K562 (cell line): ENCODE measurements at regions of chr14 and their contacts with region 1.

Region 1: DNA sequence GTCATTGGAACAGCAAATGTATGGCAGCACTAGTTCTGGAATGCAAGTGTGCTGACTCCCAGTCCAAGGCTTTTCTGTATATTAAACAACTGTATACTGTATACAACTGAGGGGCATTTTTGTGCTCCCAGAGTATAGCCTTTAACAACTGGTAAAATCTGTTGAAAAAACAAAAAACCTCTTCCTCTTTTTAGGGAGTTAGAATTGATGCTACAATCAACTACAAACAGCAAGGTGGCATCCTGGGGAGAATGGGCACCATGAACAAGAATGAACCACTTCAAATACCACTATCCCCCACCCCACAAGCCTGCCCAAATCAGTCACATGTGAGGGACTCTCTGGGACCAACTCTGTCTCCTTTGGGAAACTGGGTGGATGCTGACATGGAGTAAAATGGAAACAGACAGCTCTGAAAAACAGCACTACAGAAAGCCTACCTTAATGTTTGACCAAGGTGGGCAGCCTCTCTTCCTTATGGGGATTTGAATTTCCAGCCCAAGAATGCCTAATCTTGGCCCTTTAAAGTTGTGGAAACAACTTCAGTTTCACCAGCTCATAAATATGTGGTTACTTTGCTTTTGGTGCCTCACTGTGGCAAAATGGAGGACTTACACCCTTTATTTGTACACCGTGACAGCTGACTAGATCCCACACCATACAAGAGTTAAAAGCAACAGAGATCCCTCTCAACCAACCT is 7.5 kb downstream of the VTI1B start:
- DNase-seq: peak; percentile 16 to 65 (median 32)
- ATAC-seq: peak; percentile 95
- H3K4me3 ChIP-seq: no peak overlapping the region
- H3K27ac ChIP-seq: no peak overlapping the region
- H3K4me1 ChIP-seq: peaks cover 0 to 5% of the 10 kb centered on the region in 2 experiments; a peak in 3 of 5 replicates
- H3K27me3 ChIP-seq: no peaks in the 10 kb centered on the region
- CTCF ChIP-seq: peak; percentile 58 to 75 (median 64); a peak in 5 of 6 replicates
- EP300 ChIP-seq: no peak
- POLR2A ChIP-seq: no peak
- RAD21 ChIP-seq: peak; percentile 76 to 93

Region 2: DNA sequence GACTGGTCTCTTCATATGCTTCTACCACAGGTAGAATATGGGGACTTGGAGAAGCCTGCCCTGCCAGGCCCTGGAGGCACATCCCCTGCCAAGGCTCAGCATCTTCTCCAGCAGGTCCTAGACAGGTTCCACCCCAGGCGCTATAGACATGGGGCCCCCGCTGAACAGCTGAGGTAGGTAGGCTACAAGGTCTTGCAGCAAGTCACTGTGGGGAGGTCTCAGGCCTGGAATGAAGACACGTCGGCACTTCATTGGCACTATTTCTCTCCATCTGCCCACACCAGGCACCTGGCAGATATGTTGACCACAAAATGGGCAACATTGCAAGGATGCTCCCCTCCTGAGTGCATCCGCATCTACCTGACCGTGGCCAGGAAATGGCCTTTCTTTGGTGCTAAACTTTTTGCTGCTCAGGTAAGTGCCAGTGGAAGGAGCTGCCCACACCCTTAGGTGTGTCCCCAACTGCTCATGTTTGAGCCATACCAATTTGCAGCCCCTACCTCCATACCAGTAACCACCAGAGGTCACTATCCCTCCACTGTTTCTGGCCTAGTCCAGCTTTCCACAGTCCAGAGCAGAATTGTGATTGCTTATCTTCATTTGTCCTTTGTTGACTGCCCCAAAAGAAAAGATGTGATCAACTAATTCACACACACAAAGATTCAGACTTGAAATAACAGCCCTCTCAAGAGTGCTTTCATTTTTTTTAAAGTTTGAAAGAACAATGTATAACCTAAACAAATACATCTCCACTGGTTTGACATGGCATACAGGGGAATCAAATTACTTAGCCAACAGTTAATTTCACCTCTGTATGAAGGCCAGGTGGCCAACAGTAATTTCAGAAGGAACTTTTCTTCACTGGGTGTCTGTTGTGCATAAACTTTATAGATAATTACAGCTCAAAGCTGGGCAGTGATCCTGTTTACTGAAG is 82.9 kb before region 1 on chr14:
- CTCF ChIA-PET with region 1: interaction called, 16 read pairs
- POLR2A ChIA-PET with region 1: interaction called, 7 read pairs
- in situ Hi-C with region 1: loop called (anchors 5 kb)
- intact Hi-C with region 1: loop called (anchors 1 kb)
- DNase-seq: peak; percentile 57 to 72 (median 66)
- ATAC-seq: peak; percentile 94
- H3K4me3 ChIP-seq: no peak overlapping the region
- H3K27ac ChIP-seq: no peak overlapping the region
- H3K4me1 ChIP-seq: peaks cover 0 to 6% of the 10 kb centered on the region in 2 experiments; a peak in 2 of 5 replicates
- H3K27me3 ChIP-seq: no peaks in the 10 kb centered on the region
- CTCF ChIP-seq: peak; percentile 72 to 83 (median 78)
- EP300 ChIP-seq: no peak
- POLR2A ChIP-seq: no peak
- RAD21 ChIP-seq: peak; percentile 90 to 94

Region 3: GRCh38 chr14:67619446-67620216 is 47.3 kb before region 1 on chr14 and contains the start of gene ARG2:
- CTCF ChIA-PET with region 1: interaction called, 14 read pairs
- POLR2A ChIA-PET with region 1: interaction called, 8 read pairs
- in situ Hi-C with region 1: loop called (anchors 5 kb)
- intact Hi-C with region 1: loop called (anchors 1 kb)
- DNase-seq: peak; percentile 94 to 96 (median 96)
- ATAC-seq: peak; percentile 94
- H3K4me3 ChIP-seq: peak within 1 kb of the TSS; percentile 78
- H3K27ac ChIP-seq: peak within 1 kb of the TSS; percentile 73
- H3K4me1 ChIP-seq: peaks cover 14 to 25% of the 10 kb centered on the region in 2 experiments; a peak in 4 of 5 replicates
- H3K27me3 ChIP-seq: no peaks in the 10 kb centered on the region
- CTCF ChIP-seq: peak in 2 of 3 experiments; percentile 34 to 46; a peak in 3 of 6 replicates
- EP300 ChIP-seq: no peak
- POLR2A ChIP-seq: peak; percentile 74
- RAD21 ChIP-seq: peak; percentile 24 to 48; a peak in 2 of 4 replicates
- polyA plus RNA-seq, gene ARG2: 23.2 to 26.7 TPM

Region 4: GRCh38 chr14:67636361-67636919 is 30.5 kb before region 1 on chr14:
- CTCF ChIA-PET with region 1: no interaction called
- POLR2A ChIA-PET with region 1: no interaction called
- in situ Hi-C with region 1: no loop called
- intact Hi-C with region 1: loop called (anchors 1 kb)
- DNase-seq: peak; percentile 41 to 79 (median 60)
- ATAC-seq: peak; percentile 97
- H3K4me3 ChIP-seq: no peak overlapping the region
- H3K27ac ChIP-seq: peak overlapping the region; percentile 81; the same call in 2 of the 3 replicates
- H3K4me1 ChIP-seq: peaks cover 0 to 34% of the 10 kb centered on the region in 2 experiments; a peak in 3 of 5 replicates
- H3K27me3 ChIP-seq: no peaks in the 10 kb centered on the region
- CTCF ChIP-seq: no peak
- EP300 ChIP-seq: peak; percentile 100
- POLR2A ChIP-seq: no peak
- RAD21 ChIP-seq: peak in 1 of 2 experiments; percentile 54; a peak in 2 of 4 replicates

Region 5: DNA sequence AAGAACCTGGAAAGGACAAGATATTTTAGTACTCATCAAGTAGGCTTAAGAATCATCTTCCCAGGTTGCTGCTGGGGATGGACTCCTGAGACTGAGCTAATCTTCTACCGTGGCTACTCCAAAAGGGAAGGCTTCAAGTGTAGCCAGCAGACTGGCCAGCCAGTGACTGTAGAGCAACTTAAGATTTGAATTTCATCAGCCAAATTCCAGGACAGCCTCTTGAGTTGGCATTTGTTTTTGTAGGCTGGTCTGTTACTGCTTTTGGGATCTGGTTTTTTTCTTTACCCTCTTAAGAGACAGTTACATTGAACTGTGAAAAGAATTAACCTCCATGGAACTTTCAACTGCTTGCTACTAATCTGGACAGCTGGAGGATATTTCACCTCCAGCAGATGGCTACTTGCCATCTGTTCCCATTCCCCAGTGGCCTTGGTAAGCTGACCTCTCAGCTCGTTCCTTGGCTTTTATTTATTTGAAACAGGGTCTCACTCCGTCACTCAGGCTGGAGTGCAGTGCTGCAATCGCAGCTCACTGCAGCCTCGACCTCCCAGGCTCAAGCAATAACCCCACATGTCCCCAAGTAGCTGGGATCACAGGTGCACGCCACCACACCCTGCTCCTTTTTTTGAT is 13.1 kb before region 1 on chr14:
- CTCF ChIA-PET with region 1: no interaction called
- POLR2A ChIA-PET with region 1: interaction called, 11 read pairs
- in situ Hi-C with region 1: no loop called
- intact Hi-C with region 1: no loop called
- DNase-seq: no peak
- ATAC-seq: no peak
- H3K4me3 ChIP-seq: no peak overlapping the region
- H3K27ac ChIP-seq: no peak overlapping the region
- H3K4me1 ChIP-seq: no peaks in the 10 kb centered on the region
- H3K27me3 ChIP-seq: no peaks in the 10 kb centered on the region
- CTCF ChIP-seq: no peak
- EP300 ChIP-seq: no peak
- POLR2A ChIP-seq: no peak
- RAD21 ChIP-seq: no peak